Right ventricle myocardium inferior (tissue), 1 donor: ENCODE measurements at regions of chr3 and their contacts with region 1.

Region 1: DNA sequence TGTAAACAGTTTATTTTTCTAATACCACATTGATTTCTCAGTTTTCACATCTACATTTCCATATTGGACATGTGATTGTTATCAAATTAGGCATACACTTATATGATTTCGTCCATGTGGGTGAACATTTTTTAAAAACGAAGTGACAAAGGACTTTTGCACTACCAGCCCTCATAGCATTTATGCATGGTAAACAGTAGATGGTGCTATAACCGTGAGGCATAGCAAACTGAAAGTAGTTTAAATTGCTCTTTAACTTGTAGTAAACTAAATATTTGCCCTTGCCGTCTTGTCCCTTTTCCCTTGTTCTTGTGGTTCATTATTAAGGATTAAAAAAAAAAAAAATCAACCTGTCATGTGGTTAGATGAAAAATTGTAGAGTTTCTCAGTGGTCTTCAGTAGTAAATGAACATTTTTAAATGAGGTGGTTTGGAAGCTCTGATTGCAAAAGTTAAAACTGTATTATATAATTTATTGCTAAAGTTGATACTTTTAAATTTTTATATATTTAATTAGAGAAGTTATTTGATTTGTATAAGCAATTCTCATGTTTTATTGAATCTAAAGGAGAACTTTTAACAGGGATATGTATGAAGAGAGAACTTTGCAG is 24.0 kb downstream of the STX19 start:
- DNase-seq: no peak
- ATAC-seq: peak; percentile 64

Region 2: GRCh38 chr3:94062431-94063404 is 58.3 kb after region 1 on chr3 and contains the starts of genes DHFR2 and NSUN3:
- intact Hi-C with region 1: loop called (anchors 2 kb)
- DNase-seq: peak; percentile 94
- ATAC-seq: peak; percentile 96
- total RNA-seq, gene DHFR2: 2.7 TPM
- total RNA-seq, gene NSUN3: 4.8 TPM